ENCODE measurements at regions of chr1 and their contacts with region 1.

Region 1: DNA sequence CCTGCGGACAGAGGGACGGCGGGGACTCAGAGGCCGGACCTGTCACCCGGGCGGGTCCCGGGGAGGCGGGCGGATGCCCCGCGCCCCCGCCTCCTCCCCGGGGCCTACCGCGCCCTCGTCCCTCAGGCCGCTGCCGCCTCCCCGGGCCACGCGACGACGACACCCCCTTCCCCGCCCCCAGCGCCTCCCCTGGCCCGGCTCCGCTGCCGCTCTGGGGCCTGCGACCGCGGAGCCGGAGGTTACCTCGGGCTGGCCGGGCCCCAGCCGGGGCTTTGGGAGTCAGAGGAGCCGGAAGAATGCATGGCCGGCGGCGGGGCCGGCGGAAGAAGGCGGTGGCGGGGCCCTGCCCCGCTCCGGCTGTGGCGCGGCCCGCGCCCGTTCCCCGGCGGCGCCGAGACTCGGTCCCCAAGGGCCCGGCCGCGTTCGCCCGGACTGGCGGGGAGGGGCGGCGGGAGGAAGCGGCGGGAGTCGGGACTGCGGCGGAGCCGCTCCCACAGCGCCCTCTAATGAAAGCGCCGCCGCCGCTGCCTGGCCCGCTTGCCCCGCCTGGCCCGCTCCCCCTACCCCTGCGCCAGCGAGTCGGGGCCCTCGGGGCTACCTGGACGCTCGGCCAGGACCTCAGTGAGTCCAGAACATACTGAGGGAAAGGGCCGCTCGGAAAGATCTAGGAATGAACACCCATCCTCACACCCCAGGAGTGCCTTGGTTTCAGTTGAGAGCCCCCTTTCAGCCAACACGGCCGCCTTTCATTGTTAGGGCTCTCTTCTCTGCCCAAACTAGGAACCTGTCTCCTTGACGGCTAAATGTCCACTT is at the start of gene LPGAT1:
- DNase-seq: peak; percentile 77
- H3K4me3 Mint-ChIP-seq: peak within 1 kb of the TSS; percentile 86
- H3K27ac Mint-ChIP-seq: peak within 1 kb of the TSS; percentile 83
- H3K4me1 Mint-ChIP-seq: peaks cover 61% of the 10 kb centered on the region
- H3K27me3 Mint-ChIP-seq: no peaks in the 10 kb centered on the region
- total RNA-seq, gene LPGAT1: 31.8 to 34.7 TPM

Region 2: GRCh38 chr1:211680752-211681327 is 149.7 kb before region 1 on chr1:
- CTCF ChIA-PET with region 1: interaction called, 3 read pairs
- POLR2A ChIA-PET with region 1: no interaction called
- intact Hi-C with region 1: loop called (anchors 2 kb)
- DNase-seq: peak; percentile 83
- H3K4me3 Mint-ChIP-seq: no peak overlapping the region
- H3K27ac Mint-ChIP-seq: peak overlapping the region; percentile 69
- H3K4me1 Mint-ChIP-seq: peaks cover 9% of the 10 kb centered on the region
- H3K27me3 Mint-ChIP-seq: no peaks in the 10 kb centered on the region

Region 3: GRCh38 chr1:211735208-211736170 is 95.0 kb before region 1 on chr1:
- CTCF ChIA-PET with region 1: no interaction called
- POLR2A ChIA-PET with region 1: no interaction called
- intact Hi-C with region 1: loop called (anchors 5 kb)
- DNase-seq: no peak
- H3K4me3 Mint-ChIP-seq: no peak overlapping the region
- H3K27ac Mint-ChIP-seq: no peak overlapping the region
- H3K4me1 Mint-ChIP-seq: peaks cover 29% of the 10 kb centered on the region
- H3K27me3 Mint-ChIP-seq: no peaks in the 10 kb centered on the region

Region 4: DNA sequence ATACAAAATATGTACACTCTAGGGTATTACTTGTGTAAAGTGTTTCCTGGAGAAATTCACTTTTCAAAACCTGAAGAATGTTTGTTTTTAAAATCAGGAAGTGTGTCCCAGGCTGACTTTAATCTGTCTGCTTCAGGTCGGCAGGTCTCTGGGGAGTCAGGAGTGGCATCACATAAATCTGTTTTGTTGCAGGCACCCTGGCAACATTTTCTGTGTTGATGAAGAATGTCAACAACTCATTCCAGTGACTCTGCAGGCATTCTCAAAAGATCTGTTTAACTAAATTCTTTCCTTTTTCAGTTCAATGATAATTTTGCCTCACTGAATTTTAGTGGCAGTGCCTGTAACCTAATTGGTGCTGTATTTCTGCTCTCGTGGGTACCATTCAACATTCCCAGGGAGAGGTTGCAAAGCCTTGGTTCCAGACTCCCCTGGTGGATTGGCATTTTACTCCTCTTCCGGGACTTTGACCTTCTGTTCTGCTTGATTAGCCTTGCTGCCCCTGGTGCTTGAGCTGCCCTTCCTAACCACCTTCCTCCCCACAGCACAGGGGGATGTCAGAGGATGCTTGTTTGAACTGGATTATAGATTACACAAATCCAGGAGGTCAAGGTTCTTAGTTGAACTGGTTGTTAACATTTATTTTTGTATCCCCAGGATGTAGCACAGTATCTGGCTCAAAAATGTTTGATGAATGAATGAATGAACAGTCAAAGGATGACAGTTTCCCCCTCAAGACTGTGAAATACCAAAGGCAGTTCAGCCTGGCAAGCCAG is 55.4 kb after region 1 on chr1:
- CTCF ChIA-PET with region 1: interaction called, 3 read pairs
- POLR2A ChIA-PET with region 1: no interaction called
- intact Hi-C with region 1: loop called (anchors 5 kb)
- DNase-seq: no peak
- H3K4me3 Mint-ChIP-seq: no peak overlapping the region
- H3K27ac Mint-ChIP-seq: no peak overlapping the region
- H3K4me1 Mint-ChIP-seq: peaks cover 17% of the 10 kb centered on the region
- H3K27me3 Mint-ChIP-seq: peaks cover 19% of the 10 kb centered on the region

Region 5: GRCh38 chr1:211939876-211940468 is 109.4 kb after region 1 on chr1:
- CTCF ChIA-PET with region 1: interaction called, 4 read pairs
- POLR2A ChIA-PET with region 1: no interaction called
- intact Hi-C with region 1: loop called (anchors 1 kb)
- DNase-seq: peak; percentile 81
- H3K4me3 Mint-ChIP-seq: no peak overlapping the region
- H3K27ac Mint-ChIP-seq: no peak overlapping the region
- H3K4me1 Mint-ChIP-seq: peaks cover 44% of the 10 kb centered on the region
- H3K27me3 Mint-ChIP-seq: no peaks in the 10 kb centered on the region

Region 6: DNA sequence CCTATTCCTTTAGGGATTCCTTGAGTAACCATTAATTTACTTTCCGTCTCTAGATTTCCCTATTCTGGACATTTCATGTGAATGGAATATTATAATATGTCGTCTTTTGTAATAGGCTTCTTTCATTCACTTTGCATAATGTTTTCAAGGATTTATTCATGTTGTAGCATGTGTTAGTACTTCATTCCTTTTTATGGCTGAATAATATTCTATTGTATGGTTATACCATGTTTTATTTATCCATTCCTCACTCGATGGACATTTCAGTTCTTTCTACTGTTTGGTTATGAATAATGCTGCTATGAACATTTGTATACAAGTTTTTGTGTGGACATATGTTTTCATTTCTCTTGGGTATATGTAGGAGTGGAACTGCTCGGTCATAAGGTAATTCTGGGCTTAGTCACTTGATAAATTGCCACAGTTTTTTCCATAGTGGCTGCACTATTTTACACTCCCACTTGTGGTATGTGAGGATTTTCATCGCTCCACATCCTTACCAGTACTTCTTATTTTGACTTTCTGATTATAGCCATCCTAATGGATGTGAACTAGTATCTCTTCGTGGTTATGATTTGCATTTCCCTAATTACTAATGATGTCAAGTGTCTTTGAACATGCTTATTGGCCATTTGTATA is 472.3 kb after region 1 on chr1:
- CTCF ChIA-PET with region 1: no interaction called
- POLR2A ChIA-PET with region 1: no interaction called
- intact Hi-C with region 1: loop called (anchors 5 kb)
- DNase-seq: no peak
- H3K4me3 Mint-ChIP-seq: no peak overlapping the region
- H3K27ac Mint-ChIP-seq: no peak overlapping the region
- H3K4me1 Mint-ChIP-seq: peaks cover 52% of the 10 kb centered on the region
- H3K27me3 Mint-ChIP-seq: no peaks in the 10 kb centered on the region